AG04450 (cell line): ENCODE measurements at regions of chr12 and their contacts with region 1.

Region 1: GRCh38 chr12:12327802-12328201 is 22.2 kb downstream of the MANSC1 start:
- DNase-seq: no peak
- H3K4me3 ChIP-seq: no peak overlapping the region
- H3K27ac ChIP-seq: no peak overlapping the region
- H3K27me3 ChIP-seq: no peaks in the 10 kb centered on the region
- CTCF ChIP-seq: peak; percentile 77

Region 2: DNA sequence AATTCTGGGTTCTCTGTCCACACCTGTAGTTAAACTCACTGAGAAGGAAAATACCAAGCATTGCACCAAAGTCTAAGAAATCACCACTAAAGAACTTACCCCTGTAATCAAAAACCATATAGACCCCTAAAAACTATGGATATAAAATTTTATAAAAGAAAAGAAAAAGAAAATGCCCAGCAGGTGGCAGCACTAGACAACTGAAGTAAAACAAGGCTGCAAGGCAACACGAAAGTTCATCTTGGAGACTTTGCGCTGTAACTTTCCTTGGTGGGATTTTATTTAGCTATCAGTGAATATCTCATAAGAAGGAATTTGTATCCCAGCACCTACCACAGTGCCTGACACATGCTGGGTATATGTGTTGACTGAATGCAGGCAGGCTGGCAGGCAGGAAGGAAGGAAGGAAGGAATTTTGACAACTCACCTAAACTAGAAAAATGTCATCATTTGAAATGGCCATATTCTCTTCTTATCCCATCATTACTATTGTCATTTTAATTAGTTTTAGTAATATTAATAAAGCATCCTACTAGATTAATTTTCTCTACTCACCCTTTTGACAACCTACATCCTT is 746.5 kb before region 1 on chr12:
- CTCF ChIA-PET with region 1: interaction called, 10 read pairs
- POLR2A ChIA-PET with region 1: no interaction called
- DNase-seq: peak; percentile 59
- H3K4me3 ChIP-seq: no peak overlapping the region
- H3K27ac ChIP-seq: no peak overlapping the region
- H3K27me3 ChIP-seq: no peaks in the 10 kb centered on the region
- CTCF ChIP-seq: peak; percentile 48

Region 3: DNA sequence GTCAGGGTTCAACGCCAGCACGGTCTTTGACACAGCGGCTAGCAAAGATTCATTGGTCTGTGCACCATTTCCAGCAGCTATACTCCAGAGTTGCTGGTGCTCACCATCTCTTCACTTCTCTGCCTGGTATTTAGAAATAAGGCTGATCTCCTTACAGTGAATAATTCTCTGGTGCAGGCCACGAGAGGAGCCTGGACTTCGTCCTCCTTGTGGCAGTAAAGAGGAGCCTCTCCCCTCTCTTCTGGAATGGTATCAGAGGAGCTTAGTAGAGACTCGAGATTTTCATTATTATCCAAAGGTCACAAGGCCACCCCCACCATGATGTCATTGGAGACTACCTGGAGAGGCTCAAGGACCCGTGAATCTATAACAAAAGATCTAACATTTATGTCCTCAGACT is 287.9 kb before region 1 on chr12:
- CTCF ChIA-PET with region 1: interaction called, 26 read pairs
- POLR2A ChIA-PET with region 1: interaction called, 4 read pairs
- DNase-seq: no peak
- H3K4me3 ChIP-seq: no peak overlapping the region
- H3K27ac ChIP-seq: no peak overlapping the region
- H3K27me3 ChIP-seq: peaks cover 7% of the 10 kb centered on the region
- CTCF ChIP-seq: no peak

Region 4: GRCh38 chr12:12294215-12295005 is 33.4 kb before region 1 on chr12:
- CTCF ChIA-PET with region 1: no interaction called
- POLR2A ChIA-PET with region 1: no interaction called
- DNase-seq: no peak
- H3K4me3 ChIP-seq: no peak overlapping the region
- H3K27ac ChIP-seq: no peak overlapping the region
- H3K27me3 ChIP-seq: no peaks in the 10 kb centered on the region
- CTCF ChIP-seq: no peak

Region 5: GRCh38 chr12:12305568-12306300 is 22.1 kb before region 1 on chr12:
- CTCF ChIA-PET with region 1: no interaction called
- POLR2A ChIA-PET with region 1: no interaction called
- DNase-seq: no peak
- H3K4me3 ChIP-seq: no peak overlapping the region
- H3K27ac ChIP-seq: no peak overlapping the region
- H3K27me3 ChIP-seq: no peaks in the 10 kb centered on the region
- CTCF ChIP-seq: no peak

Region 6: DNA sequence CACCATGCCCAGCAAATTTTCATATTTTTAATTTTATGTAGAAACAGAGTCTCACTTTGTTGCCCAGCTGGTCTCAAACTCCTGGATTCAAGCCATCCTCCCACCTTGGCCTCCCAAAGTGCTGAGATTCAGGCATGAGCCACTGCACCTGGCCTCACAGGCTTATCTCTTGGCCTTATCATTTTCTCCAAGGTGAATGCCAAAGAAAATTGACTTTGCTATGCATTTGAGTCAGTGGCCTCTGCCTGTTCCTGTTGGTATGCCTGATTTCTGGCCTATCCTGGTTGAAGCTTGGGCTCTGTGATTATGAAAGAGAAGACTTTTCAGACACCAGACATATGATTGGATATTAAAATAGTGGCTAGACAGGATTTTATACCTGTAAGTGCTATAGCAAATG is 12.0 kb before region 1 on chr12:
- CTCF ChIA-PET with region 1: interaction called, 10 read pairs
- POLR2A ChIA-PET with region 1: no interaction called
- DNase-seq: no peak
- H3K4me3 ChIP-seq: no peak overlapping the region
- H3K27ac ChIP-seq: no peak overlapping the region
- H3K27me3 ChIP-seq: no peaks in the 10 kb centered on the region
- CTCF ChIP-seq: no peak